ENCODE measurements at regions of chr13 and their contacts with region 1.

Region 1: GRCh38 chr13:49606747-49607648 is 21.3 kb upstream of the ARL11 start:
- DNase-seq: peak; percentile 89 to 93 (median 92)
- H3K4me3 ChIP-seq: peak overlapping the region in 6 of 7 experiments; percentile 41 to 81 (median 64)
- H3K27ac ChIP-seq: peak overlapping the region in 1 of 2 experiments; percentile 57
- H3K4me1 ChIP-seq: peaks cover 5 to 45% (median 21%) of the 10 kb centered on the region in 4 experiments
- H3K27me3 ChIP-seq: no peaks in the 10 kb centered on the region

Region 2: DNA sequence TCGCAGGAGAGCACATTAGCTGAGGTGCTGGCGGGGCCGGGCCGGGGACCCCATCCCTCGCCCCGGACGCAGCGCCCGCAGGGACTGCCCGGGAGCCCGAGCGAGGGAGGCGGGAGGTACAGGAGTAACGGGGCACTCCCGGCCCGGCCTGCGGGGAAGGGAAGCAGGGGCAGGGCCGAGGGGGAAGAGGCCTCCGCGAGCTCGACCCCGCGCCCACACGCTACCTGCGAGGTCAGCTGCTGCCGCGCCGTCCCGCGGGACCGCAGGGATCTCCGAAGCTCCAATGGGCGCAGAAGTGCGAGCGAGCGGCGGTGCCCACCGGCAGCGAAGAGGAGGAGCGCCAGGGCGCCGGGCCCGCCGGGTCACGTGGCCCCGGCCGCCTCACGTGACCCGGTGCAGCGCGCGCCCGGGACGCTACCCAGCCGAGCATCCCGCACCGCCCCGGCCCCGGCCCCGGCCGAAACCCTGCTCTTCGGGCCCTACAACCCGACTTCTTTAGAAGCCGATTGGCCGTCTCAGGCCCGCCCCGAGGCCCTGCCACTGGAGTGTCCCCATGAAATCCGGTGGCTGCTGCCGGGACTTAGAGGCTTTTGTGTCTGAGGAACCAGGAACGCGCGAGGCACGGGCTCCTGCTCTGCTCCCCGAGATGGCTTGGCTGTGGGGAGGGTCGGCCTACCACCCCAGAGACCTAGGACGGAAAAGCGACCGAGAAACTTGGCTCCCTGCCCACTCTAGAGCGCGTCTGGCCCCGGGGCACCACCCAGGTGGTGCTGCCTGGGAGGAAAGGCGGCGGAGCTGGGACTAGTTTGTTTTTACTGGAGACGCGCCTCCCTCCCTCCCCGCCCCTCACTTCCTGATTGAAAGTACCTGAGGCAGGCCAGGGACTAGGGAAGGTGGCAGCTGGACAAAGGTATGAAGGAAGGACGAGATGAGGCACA is 21.5 kb before region 1 on chr13 and contains the start of gene RCBTB1:
- CTCF ChIA-PET with region 1: interaction called, 11 read pairs
- POLR2A ChIA-PET with region 1: no interaction called
- DNase-seq: peak; percentile 61 to 86 (median 76)
- H3K4me3 ChIP-seq: peak within 1 kb of the TSS; percentile 81 to 97 (median 89)
- H3K27ac ChIP-seq: peak within 1 kb of the TSS; percentile 58 to 68
- H3K4me1 ChIP-seq: peaks cover 6 to 32% (median 21%) of the 10 kb centered on the region in 4 experiments
- H3K27me3 ChIP-seq: no peaks in the 10 kb centered on the region

Region 3: DNA sequence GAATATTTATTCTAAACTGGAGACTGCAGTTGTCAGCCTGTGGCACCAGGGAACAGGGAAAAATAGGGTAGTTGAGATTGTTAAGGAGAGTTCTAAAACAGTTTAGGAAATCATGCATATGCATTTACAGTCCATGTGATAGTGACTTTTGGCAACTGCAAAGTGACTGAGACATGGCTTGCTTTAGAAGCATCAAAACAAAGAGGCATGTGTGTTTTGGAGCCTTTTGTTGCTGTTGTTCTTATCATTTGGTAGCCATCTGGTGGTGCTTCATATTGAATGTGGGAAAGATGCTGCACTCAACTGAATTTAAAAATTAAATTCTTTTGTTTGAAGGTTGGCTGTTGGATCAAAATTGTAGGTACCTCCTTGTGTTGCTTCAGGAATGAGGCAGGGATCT is 94.5 kb after region 1 on chr13:
- CTCF ChIA-PET with region 1: no interaction called
- POLR2A ChIA-PET with region 1: no interaction called
- DNase-seq: no peak
- H3K4me3 ChIP-seq: no peak overlapping the region
- H3K27ac ChIP-seq: no peak overlapping the region
- H3K4me1 ChIP-seq: peaks cover 0 to 6% (median 0%) of the 10 kb centered on the region in 4 experiments
- H3K27me3 ChIP-seq: no peaks in the 10 kb centered on the region

Region 4: GRCh38 chr13:49869519-49869918 is 262.5 kb after region 1 on chr13:
- CTCF ChIA-PET with region 1: no interaction called
- POLR2A ChIA-PET with region 1: no interaction called
- DNase-seq: no peak
- H3K4me3 ChIP-seq: no peak overlapping the region
- H3K27ac ChIP-seq: no peak overlapping the region
- H3K4me1 ChIP-seq: no peaks in the 10 kb centered on the region
- H3K27me3 ChIP-seq: no peaks in the 10 kb centered on the region

Measured in common myeloid progenitor, CD34-positive (primary cell).